ENCODE measurements at regions of chr17 and their contacts with region 1.

Region 1: DNA sequence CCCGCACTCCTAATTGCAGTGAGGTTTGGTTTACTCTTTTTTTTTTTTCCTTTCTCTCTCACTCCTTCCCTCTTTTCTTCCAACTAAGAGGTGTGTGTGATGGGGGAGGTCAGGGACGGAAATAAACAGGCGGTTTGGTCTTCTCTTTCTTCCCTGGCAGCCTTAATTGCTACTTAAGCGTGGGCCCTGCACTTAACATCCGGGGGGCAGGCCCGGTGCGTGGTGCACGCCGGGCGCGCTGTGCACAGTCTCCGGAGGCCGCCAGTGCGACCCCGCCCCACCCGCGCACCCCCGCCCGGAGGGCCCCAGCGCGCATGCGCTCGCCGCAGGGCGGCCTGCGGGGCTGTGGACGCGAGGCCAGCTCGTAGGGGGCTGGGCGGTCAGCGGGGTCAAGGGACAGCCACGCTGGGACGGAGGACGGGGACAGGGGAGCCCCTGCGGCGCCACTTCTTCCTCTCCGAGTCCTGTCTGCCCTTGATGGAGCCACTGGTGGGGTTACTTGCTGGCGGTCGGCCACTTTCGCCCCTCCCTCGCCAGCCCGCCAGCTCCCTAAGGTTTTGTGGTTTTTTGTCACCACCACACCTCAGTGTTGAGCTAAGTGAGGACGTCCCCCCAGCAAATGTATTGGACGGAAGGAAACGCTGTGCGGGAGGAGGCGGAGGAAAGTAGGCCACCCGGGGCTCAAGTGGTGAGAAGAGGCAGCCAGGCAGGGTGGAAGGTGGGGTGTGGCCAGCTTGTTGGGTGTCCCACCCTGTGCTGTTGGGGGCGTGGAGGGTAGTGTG is 120.9 kb downstream of the MRM1 start:
- DNase-seq: no peak
- ATAC-seq: peak; percentile 97
- H3K4me3 ChIP-seq: peak overlapping the region; percentile 65
- H3K27ac ChIP-seq: no peak overlapping the region
- H3K4me1 ChIP-seq: peaks cover 14% of the 10 kb centered on the region
- H3K27me3 ChIP-seq: peaks cover 0 to 3% of the 10 kb centered on the region in 2 experiments
- CTCF ChIP-seq: no peak
- EP300 ChIP-seq: no peak
- POLR2A ChIP-seq: peak; percentile 45; the same call in 1 of the 2 replicates
- RAD21 ChIP-seq: no peak

Region 2: DNA sequence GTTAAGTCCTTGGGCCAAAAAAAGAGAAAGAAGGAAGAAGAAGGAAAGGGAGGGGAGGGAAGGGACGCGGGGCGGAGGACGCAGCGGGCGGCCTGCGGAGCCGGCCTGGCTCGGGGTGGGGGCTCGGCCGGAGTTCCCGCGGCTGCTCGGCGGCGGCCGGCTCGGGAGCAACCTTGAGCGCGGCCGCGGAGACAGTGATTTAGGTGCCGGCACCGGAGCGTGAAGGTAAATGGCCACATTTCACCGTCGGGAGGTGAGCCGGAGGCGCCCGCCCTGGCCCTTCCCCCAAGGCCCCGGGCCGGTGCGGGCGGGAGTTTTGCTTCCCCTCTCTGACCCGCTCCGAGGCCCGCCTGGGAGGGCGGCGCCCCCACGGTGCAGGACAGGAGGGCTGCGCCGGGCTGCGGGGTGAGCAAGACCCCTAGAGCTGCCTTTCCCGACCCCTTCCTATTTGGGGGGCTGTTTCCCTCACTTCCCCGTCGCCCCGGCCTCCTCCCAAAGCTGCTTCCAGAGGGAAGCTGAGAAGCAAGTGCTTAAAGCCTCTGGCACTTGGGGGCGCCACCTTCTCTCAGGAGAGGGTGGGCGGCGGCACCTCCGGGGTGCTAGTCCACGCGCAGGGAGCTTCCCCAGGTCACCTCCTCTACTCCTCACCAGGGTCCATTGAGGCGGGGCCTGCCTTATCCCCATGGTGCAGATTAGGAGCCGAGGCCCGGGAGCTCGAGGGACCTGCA is 64.4 kb before region 1 on chr17:
- CTCF ChIA-PET with region 1: no interaction called
- POLR2A ChIA-PET with region 1: no interaction called
- RAD21 ChIA-PET with region 1: no interaction called
- SMC1A ChIA-PET with region 1: no interaction called
- in situ Hi-C with region 1: no loop called
- intact Hi-C with region 1: no loop called
- DNase-seq: no peak
- ATAC-seq: no peak
- H3K4me3 ChIP-seq: no peak overlapping the region
- H3K27ac ChIP-seq: no peak overlapping the region
- H3K4me1 ChIP-seq: no peaks in the 10 kb centered on the region
- H3K27me3 ChIP-seq: peaks cover 4 to 9% of the 10 kb centered on the region in 2 experiments; a peak in 3 of 4 replicates
- CTCF ChIP-seq: no peak
- EP300 ChIP-seq: no peak
- POLR2A ChIP-seq: no peak
- RAD21 ChIP-seq: 0 out of 2 replicates have a peak, but pooled peaks have one; percentile 8

Region 3: GRCh38 chr17:36705874-36706731 is 16.2 kb before region 1 on chr17:
- CTCF ChIA-PET with region 1: interaction called, 10 read pairs
- POLR2A ChIA-PET with region 1: no interaction called
- RAD21 ChIA-PET with region 1: no interaction called
- SMC1A ChIA-PET with region 1: interaction called, 3 read pairs
- in situ Hi-C with region 1: no loop called
- intact Hi-C with region 1: no loop called
- DNase-seq: no peak
- ATAC-seq: peak; percentile 92
- H3K4me3 ChIP-seq: no peak overlapping the region
- H3K27ac ChIP-seq: no peak overlapping the region
- H3K4me1 ChIP-seq: no peaks in the 10 kb centered on the region
- H3K27me3 ChIP-seq: no peaks in the 10 kb centered on the region; a peak in 2 of 4 replicates
- CTCF ChIP-seq: peak; percentile 66 to 78 (median 78)
- EP300 ChIP-seq: no peak
- POLR2A ChIP-seq: no peak
- RAD21 ChIP-seq: peak; percentile 68

Region 4: GRCh38 chr17:36742267-36743000 is 20.1 kb after region 1 on chr17:
- CTCF ChIA-PET with region 1: no interaction called
- POLR2A ChIA-PET with region 1: no interaction called
- RAD21 ChIA-PET with region 1: no interaction called
- SMC1A ChIA-PET with region 1: no interaction called
- in situ Hi-C with region 1: no loop called
- intact Hi-C with region 1: no loop called
- DNase-seq: no peak
- ATAC-seq: no peak
- H3K4me3 ChIP-seq: no peak overlapping the region
- H3K27ac ChIP-seq: no peak overlapping the region
- H3K4me1 ChIP-seq: no peaks in the 10 kb centered on the region
- H3K27me3 ChIP-seq: peaks cover 0 to 5% of the 10 kb centered on the region in 2 experiments; a peak in 2 of 4 replicates
- CTCF ChIP-seq: no peak
- EP300 ChIP-seq: no peak
- POLR2A ChIP-seq: no peak
- RAD21 ChIP-seq: no peak

Measured in GM12878 (cell line).